Left ventricle myocardium inferior (tissue), 1 donor: ENCODE measurements at regions of chr3 and their contacts with region 1.

Region 1: DNA sequence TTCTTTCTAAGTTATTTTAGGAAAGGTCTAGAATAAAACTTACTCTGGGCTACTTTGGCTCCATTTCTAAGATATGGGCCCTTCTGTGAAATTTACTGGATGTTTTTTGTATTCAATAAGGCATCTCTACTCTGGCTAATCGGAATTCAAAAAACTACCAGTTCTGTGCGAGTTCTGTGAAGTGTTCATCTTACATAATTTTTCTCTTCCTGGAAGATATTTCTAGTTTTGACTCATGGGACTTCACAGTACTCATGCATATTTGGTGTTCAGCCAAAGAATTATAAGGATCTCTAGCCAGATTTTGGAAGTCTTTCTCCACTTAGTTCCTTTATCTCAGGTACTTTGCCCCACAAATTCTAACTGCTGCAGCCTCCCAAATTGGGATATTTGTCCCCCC is 46.4 kb upstream of the MBNL1 start:
- DNase-seq: no peak
- H3K4me3 ChIP-seq: no peak overlapping the region
- H3K27ac ChIP-seq: peak overlapping the region; percentile 60
- H3K4me1 ChIP-seq: peaks cover 23% of the 10 kb centered on the region
- H3K27me3 ChIP-seq: no peaks in the 10 kb centered on the region
- CTCF ChIP-seq: no peak

Region 2: DNA sequence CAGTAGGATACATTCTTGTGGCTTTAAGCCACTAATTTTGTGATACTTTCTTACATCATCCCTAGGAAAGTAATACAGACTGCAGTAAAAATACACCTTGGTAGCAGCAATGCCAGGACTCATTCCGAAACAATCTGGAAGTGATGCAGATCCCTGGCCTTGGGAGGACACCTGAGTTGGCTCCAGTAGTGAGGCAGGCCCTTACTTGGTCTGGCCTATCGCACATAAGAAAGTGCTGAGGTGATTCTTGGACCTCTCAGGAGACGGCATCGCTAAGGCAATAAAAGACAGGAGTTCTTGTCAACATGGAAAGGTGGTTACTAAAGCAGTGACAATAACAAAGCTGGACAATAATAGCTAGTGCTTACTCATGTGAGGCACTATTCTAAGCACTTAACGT is 222.4 kb before region 1 on chr3:
- intact Hi-C with region 1: no loop called
- DNase-seq: no peak
- H3K4me3 ChIP-seq: no peak overlapping the region
- H3K27ac ChIP-seq: no peak overlapping the region
- H3K4me1 ChIP-seq: no peaks in the 10 kb centered on the region
- H3K27me3 ChIP-seq: no peaks in the 10 kb centered on the region
- CTCF ChIP-seq: no peak

Region 3: DNA sequence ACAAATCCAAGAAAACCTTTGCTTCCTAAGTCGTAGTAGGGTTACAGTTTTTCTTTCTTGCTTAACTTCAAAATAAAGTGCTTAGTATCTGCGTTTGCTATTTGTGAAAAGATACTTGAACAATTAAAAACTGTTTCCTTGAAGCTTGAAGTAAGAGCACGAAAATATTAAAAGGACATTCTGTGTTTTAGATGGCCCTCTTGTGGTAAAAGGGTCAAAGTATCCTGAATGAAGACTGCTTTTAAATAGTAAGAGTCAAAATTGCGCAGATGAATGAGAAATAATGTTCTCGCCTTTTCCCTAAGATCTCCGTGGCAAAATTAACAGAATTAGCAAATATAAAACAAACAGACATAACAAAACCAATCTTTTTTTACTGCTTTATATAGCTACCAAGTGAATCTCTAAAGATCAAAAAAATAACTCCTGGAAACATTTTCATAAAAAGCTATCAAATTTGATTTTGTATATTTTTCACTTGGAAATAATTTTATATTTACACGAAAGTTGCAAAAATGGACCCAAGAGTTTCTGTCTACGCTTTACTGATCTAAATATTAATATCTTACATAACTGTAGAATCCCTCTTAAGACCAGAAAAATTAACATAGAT is 221.8 kb after region 1 on chr3:
- intact Hi-C with region 1: loop called (anchors 10 kb)
- DNase-seq: no peak
- H3K4me3 ChIP-seq: no peak overlapping the region
- H3K27ac ChIP-seq: peak overlapping the region; percentile 53
- H3K4me1 ChIP-seq: peaks cover 82% of the 10 kb centered on the region
- H3K27me3 ChIP-seq: no peaks in the 10 kb centered on the region
- CTCF ChIP-seq: peak; percentile 81